HCT116 (cell line): ENCODE measurements at regions of chr10 and their contacts with region 1.

Region 1: GRCh38 chr10:33008499-33009243 is 50.6 kb upstream of the ITGB1 start:
- DNase-seq: peak; percentile 71
- ATAC-seq: no peak; the same call in 1 of the 2 replicates
- H3K4me3 ChIP-seq: no peak overlapping the region; a peak in 1 of 4 replicates
- H3K27ac ChIP-seq: no peak overlapping the region
- H3K4me1 ChIP-seq: peaks cover 44 to 63% of the 10 kb centered on the region in 2 experiments
- H3K27me3 ChIP-seq: no peaks in the 10 kb centered on the region
- CTCF ChIP-seq: peak; percentile 95 to 99 (median 96)
- POLR2A ChIP-seq: no peak
- RAD21 ChIP-seq: peak; percentile 99

Region 2: GRCh38 chr10:32346134-32346550 is 662.5 kb before region 1 on chr10:
- CTCF ChIA-PET with region 1: no interaction called
- POLR2A ChIA-PET with region 1: no interaction called
- RAD21 ChIA-PET with region 1: no interaction called
- intact Hi-C with region 1: loop called (anchors 5 kb)
- DNase-seq: peak; percentile 90
- ATAC-seq: peak; percentile 92
- H3K4me3 ChIP-seq: peak overlapping the region; percentile 90 to 93
- H3K27ac ChIP-seq: peak overlapping the region; percentile 100
- H3K4me1 ChIP-seq: peaks cover 4 to 13% of the 10 kb centered on the region in 2 experiments; a peak in 3 of 4 replicates
- H3K27me3 ChIP-seq: no peaks in the 10 kb centered on the region
- CTCF ChIP-seq: peak; percentile 92 to 98 (median 92)
- POLR2A ChIP-seq: no peak
- RAD21 ChIP-seq: peak; percentile 86

Region 3: DNA sequence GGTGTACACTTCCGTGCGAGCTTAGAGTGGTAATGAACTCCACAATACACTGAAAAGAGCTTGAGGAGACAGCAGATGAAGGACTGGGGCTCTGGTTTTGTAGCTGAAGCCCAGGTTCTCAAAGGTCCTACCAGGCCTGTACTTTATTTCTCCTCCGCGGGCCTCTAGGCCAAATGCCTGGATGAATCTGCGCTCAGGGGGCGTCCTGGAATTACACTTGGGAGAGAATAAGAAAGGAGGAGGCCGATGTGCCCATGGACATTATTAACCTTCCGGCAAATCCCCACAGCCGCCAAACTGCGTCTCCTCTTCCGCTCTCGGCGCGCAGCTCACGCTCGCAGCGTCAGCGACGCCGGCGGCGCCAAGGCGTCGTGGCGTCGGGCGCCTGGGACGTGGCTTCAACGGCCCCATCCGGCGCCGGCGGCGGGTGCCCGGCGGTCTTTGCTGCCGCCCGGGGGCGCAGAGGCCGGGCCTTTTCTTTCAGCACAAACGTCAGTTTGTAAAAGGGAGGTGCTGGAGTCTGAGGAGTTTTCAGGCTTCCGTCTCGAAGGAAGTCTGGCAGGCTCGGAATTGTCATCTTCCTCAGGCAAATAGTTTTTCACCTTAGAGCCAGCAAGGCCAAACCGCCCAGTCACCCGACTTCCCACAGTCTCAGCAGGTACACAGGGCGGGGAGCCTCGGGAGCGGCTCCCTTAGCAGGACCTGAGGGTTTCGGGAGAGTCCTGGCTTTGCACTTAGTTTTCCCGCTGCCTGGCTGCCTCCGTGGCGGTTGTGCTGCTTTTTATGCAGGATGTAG is 562.7 kb before region 1 on chr10 and contains the start of gene CCDC7:
- CTCF ChIA-PET with region 1: no interaction called
- POLR2A ChIA-PET with region 1: no interaction called
- RAD21 ChIA-PET with region 1: no interaction called
- intact Hi-C with region 1: loop called (anchors 1 kb)
- DNase-seq: peak; percentile 67
- ATAC-seq: peak; percentile 97
- H3K4me3 ChIP-seq: peak within 1 kb of the TSS; percentile 66 to 70
- H3K27ac ChIP-seq: peak within 1 kb of the TSS; percentile 87
- H3K4me1 ChIP-seq: peaks cover 8 to 11% of the 10 kb centered on the region in 2 experiments
- H3K27me3 ChIP-seq: no peaks in the 10 kb centered on the region
- CTCF ChIP-seq: peak in 2 of 3 experiments; percentile 9 to 44; a peak in 2 of 6 replicates
- POLR2A ChIP-seq: peak; percentile 84
- RAD21 ChIP-seq: peak; percentile 49
- total RNA-seq, gene CCDC7: 4.0 TPM

Region 4: GRCh38 chr10:32795598-32796183 is 213.0 kb before region 1 on chr10:
- CTCF ChIA-PET with region 1: interaction called, 18 read pairs
- POLR2A ChIA-PET with region 1: no interaction called
- RAD21 ChIA-PET with region 1: interaction called, 3 to 6 read pairs
- intact Hi-C with region 1: loop called (anchors 1 kb)
- DNase-seq: peak; percentile 16
- ATAC-seq: peak; percentile 61
- H3K4me3 ChIP-seq: no peak overlapping the region
- H3K27ac ChIP-seq: no peak overlapping the region
- H3K4me1 ChIP-seq: no peaks in the 10 kb centered on the region
- H3K27me3 ChIP-seq: no peaks in the 10 kb centered on the region
- CTCF ChIP-seq: peak; percentile 59 to 82 (median 80); a peak in 5 of 6 replicates
- POLR2A ChIP-seq: no peak
- RAD21 ChIP-seq: peak; percentile 94

Region 5: DNA sequence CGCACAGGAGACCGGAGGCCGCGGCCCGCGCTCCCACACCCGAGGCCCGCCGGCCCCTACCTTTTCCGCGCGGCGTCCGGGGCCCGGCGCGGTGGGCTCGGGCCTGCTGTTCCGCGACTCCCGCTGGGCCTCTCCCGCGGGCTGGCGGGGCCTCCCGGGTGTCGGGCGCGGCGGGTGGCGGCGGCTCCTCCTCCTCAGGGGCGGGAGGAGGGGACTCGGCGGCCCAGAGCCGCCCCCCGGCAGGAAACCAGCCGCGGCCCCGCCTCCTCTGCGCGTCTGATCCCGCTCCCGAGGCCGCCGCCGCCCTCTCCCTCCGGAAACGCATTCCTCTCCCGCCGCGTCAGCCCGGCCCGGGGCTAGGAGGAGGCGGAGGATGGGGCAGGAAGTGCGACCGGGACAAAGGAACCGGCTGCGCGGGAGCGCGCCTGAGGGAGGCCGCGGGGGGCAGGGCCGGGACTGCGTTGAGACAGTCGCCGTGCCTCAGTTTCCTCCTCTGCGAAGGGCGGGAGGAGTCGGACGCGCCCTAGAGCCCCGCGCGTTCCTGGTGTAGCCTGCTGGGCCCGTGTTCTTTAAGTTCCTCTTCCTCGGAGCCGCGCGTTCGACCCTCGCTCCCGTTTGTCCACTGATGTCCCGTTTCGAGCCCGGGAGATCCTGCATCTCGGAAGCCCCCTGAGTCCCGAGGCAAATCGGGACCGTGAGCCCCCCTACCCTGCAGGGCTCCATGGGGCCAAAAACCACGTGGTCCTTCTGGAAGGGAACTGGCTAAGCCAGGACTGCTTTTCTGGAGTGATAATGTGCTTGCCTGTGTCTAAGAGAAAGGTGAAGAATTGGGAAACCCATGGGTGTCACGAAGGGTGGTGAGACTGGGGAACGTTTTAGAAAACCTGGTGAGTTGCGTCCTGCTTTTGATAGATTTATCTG is 50.3 kb before region 1 on chr10 and contains the start of gene ITGB1:
- CTCF ChIA-PET with region 1: interaction called, 4 read pairs
- POLR2A ChIA-PET with region 1: interaction called, 4 read pairs
- RAD21 ChIA-PET with region 1: interaction called in 1 of 2 experiments, 4 read pairs
- intact Hi-C with region 1: loop called (anchors 1 kb)
- DNase-seq: peak; percentile 83
- ATAC-seq: peak; percentile 86
- H3K4me3 ChIP-seq: peak within 1 kb of the TSS; percentile 80 to 87
- H3K27ac ChIP-seq: peak within 1 kb of the TSS; percentile 94
- H3K4me1 ChIP-seq: peaks cover 59 to 85% of the 10 kb centered on the region in 2 experiments
- H3K27me3 ChIP-seq: no peaks in the 10 kb centered on the region
- CTCF ChIP-seq: no peak
- POLR2A ChIP-seq: no peak
- RAD21 ChIP-seq: peak; percentile 21; the same call in 1 of the 2 replicates
- total RNA-seq, gene ITGB1: 366 TPM

Region 6: GRCh38 chr10:33134011-33134751 is 125.5 kb after region 1 on chr10:
- CTCF ChIA-PET with region 1: interaction called, 6 read pairs
- POLR2A ChIA-PET with region 1: no interaction called
- RAD21 ChIA-PET with region 1: no interaction called
- intact Hi-C with region 1: loop called (anchors 1 kb)
- DNase-seq: peak; percentile 99
- ATAC-seq: peak; percentile 83
- H3K4me3 ChIP-seq: peak overlapping the region in 1 of 2 experiments; percentile 9; a peak in 2 of 4 replicates
- H3K27ac ChIP-seq: peak overlapping the region; percentile 84
- H3K4me1 ChIP-seq: peaks cover 45 to 71% of the 10 kb centered on the region in 2 experiments
- H3K27me3 ChIP-seq: no peaks in the 10 kb centered on the region
- CTCF ChIP-seq: no peak
- POLR2A ChIP-seq: no peak
- RAD21 ChIP-seq: peak; percentile 41; the same call in 1 of the 2 replicates

Region 7: GRCh38 chr10:33204049-33204448 is 195.4 kb after region 1 on chr10:
- CTCF ChIA-PET with region 1: no interaction called
- POLR2A ChIA-PET with region 1: no interaction called
- RAD21 ChIA-PET with region 1: no interaction called
- intact Hi-C with region 1: no loop called
- DNase-seq: no peak
- ATAC-seq: no peak
- H3K4me3 ChIP-seq: no peak overlapping the region
- H3K27ac ChIP-seq: no peak overlapping the region
- H3K4me1 ChIP-seq: no peaks in the 10 kb centered on the region
- H3K27me3 ChIP-seq: no peaks in the 10 kb centered on the region
- CTCF ChIP-seq: no peak
- POLR2A ChIP-seq: no peak
- RAD21 ChIP-seq: no peak

Region 8: GRCh38 chr10:33258967-33259366 is 250.3 kb after region 1 on chr10:
- CTCF ChIA-PET with region 1: no interaction called
- POLR2A ChIA-PET with region 1: no interaction called
- RAD21 ChIA-PET with region 1: no interaction called
- intact Hi-C with region 1: no loop called
- DNase-seq: no peak
- ATAC-seq: peak; percentile 78
- H3K4me3 ChIP-seq: peak overlapping the region; percentile 5 to 17; a peak in 3 of 4 replicates
- H3K27ac ChIP-seq: no peak overlapping the region
- H3K4me1 ChIP-seq: peaks cover 7 to 31% of the 10 kb centered on the region in 2 experiments
- H3K27me3 ChIP-seq: no peaks in the 10 kb centered on the region
- CTCF ChIP-seq: no peak
- POLR2A ChIP-seq: no peak
- RAD21 ChIP-seq: no peak

Region 9: DNA sequence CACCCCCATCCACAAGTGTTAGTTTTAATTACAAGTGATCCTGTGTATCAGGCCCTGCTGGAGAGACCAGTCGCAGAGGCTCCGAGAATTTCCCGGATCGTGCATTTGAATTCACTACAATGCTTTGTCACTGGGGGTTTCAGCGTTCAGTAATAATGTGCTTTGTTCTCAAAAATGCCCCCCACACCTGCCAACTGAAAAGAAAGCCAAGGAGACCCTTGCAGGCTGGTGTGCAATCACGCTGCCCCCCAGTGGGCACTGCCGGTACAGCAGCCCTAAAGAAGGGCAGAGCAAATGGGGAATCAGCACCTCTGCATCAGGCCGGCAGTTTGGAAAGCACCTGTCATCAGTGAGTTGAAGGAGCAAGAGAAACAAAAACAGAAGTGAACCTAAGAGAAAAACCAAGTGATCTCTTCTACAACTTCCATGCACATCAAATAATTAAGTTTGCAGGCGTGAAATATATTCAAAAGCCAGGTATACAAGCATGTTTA is 1628.8 kb after region 1 on chr10:
- CTCF ChIA-PET with region 1: no interaction called
- POLR2A ChIA-PET with region 1: no interaction called
- RAD21 ChIA-PET with region 1: no interaction called
- intact Hi-C with region 1: loop called (anchors 5 kb)
- DNase-seq: peak; percentile 10
- ATAC-seq: peak; percentile 71
- H3K4me3 ChIP-seq: no peak overlapping the region
- H3K27ac ChIP-seq: no peak overlapping the region
- H3K4me1 ChIP-seq: no peaks in the 10 kb centered on the region
- H3K27me3 ChIP-seq: no peaks in the 10 kb centered on the region
- CTCF ChIP-seq: peak; percentile 66 to 99 (median 99)
- POLR2A ChIP-seq: no peak
- RAD21 ChIP-seq: peak; percentile 82